CD4-positive, alpha-beta T cell (primary cell): ENCODE measurements at regions of chr4 and their contacts with region 1.

Region 1: GRCh38 chr4:52028969-52029368 is 8.8 kb upstream of the LRRC66 start:
- DNase-seq: no peak
- ATAC-seq: no peak
- H3K4me3 ChIP-seq: no peak overlapping the region
- H3K4me3 Mint-ChIP-seq: no peak overlapping the region
- H3K27ac ChIP-seq: no peak overlapping the region
- H3K27ac Mint-ChIP-seq: no peak overlapping the region
- H3K4me1 ChIP-seq: no peaks in the 10 kb centered on the region
- H3K4me1 Mint-ChIP-seq: no peaks in the 10 kb centered on the region
- H3K27me3 ChIP-seq: no peaks in the 10 kb centered on the region
- H3K27me3 Mint-ChIP-seq: no peaks in the 10 kb centered on the region
- CTCF ChIP-seq: no peak

Region 2: GRCh38 chr4:51831133-51831532 is 197.8 kb before region 1 on chr4:
- CTCF ChIA-PET with region 1: interaction called, 3 read pairs
- POLR2A ChIA-PET with region 1: no interaction called
- intact Hi-C with region 1: loop called (anchors 1 kb)
- DNase-seq: peak; percentile 48 to 77 (median 60)
- ATAC-seq: peak; percentile 71
- H3K4me3 ChIP-seq: no peak overlapping the region
- H3K4me3 Mint-ChIP-seq: no peak overlapping the region
- H3K27ac ChIP-seq: no peak overlapping the region
- H3K27ac Mint-ChIP-seq: no peak overlapping the region
- H3K4me1 ChIP-seq: no peaks in the 10 kb centered on the region
- H3K4me1 Mint-ChIP-seq: no peaks in the 10 kb centered on the region
- H3K27me3 ChIP-seq: no peaks in the 10 kb centered on the region
- H3K27me3 Mint-ChIP-seq: peaks cover 9% of the 10 kb centered on the region
- CTCF ChIP-seq: peak; percentile 83

Region 3: DNA sequence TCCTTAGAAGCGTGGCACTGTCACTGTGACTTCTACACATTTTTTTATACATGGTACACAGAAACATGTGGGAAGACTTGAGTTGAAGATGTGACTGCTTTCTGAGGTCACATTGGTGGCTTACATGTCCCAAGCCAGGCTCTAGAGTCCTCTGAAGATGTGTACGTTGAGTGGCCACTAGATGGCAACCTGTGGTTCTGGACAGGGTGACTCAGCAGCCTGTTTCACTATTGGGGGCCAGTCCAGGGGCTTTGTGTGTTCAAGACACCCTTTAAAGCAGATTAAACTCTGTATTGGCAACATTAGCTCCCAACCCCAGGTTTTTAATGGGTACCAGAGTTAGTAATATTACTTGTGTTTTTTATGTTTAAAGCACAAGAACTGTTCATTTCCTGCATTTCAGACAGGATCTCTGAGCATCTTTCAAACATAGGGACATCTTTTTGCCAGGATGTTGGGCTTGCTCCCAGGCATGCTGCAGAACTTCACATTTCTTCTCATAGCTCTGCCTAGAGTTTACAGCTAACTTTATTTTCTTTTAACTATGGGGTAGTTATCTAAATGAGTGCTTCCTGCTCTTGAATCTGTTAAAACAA is 133.1 kb before region 1 on chr4:
- CTCF ChIA-PET with region 1: no interaction called
- POLR2A ChIA-PET with region 1: no interaction called
- intact Hi-C with region 1: loop called (anchors 1 to 5 kb)
- DNase-seq: peak; percentile 9 to 71 (median 22)
- ATAC-seq: peak; percentile 85
- H3K4me3 ChIP-seq: no peak overlapping the region
- H3K4me3 Mint-ChIP-seq: no peak overlapping the region
- H3K27ac ChIP-seq: no peak overlapping the region
- H3K27ac Mint-ChIP-seq: no peak overlapping the region
- H3K4me1 ChIP-seq: no peaks in the 10 kb centered on the region
- H3K4me1 Mint-ChIP-seq: no peaks in the 10 kb centered on the region
- H3K27me3 ChIP-seq: no peaks in the 10 kb centered on the region
- H3K27me3 Mint-ChIP-seq: no peaks in the 10 kb centered on the region
- CTCF ChIP-seq: peak; percentile 84

Region 4: GRCh38 chr4:52421811-52422213 is 392.8 kb after region 1 on chr4:
- CTCF ChIA-PET with region 1: no interaction called
- POLR2A ChIA-PET with region 1: no interaction called
- intact Hi-C with region 1: no loop called
- DNase-seq: no peak
- ATAC-seq: no peak
- H3K4me3 ChIP-seq: no peak overlapping the region
- H3K4me3 Mint-ChIP-seq: no peak overlapping the region
- H3K27ac ChIP-seq: no peak overlapping the region
- H3K27ac Mint-ChIP-seq: no peak overlapping the region
- H3K4me1 ChIP-seq: no peaks in the 10 kb centered on the region
- H3K4me1 Mint-ChIP-seq: no peaks in the 10 kb centered on the region
- H3K27me3 ChIP-seq: no peaks in the 10 kb centered on the region
- H3K27me3 Mint-ChIP-seq: no peaks in the 10 kb centered on the region
- CTCF ChIP-seq: no peak